Panc1 (cell line): ENCODE measurements at regions of chr10 and their contacts with region 1.

Region 1: GRCh38 chr10:11424456-11425297 is 186.8 kb downstream of the USP6NL start:
- DNase-seq: peak; percentile 25
- ATAC-seq: peak; percentile 89
- H3K4me3 ChIP-seq: no peak overlapping the region
- H3K27ac ChIP-seq: no peak overlapping the region
- H3K4me1 ChIP-seq: no peaks in the 10 kb centered on the region
- H3K27me3 ChIP-seq: no peaks in the 10 kb centered on the region
- CTCF ChIP-seq: peak; percentile 89

Region 2: DNA sequence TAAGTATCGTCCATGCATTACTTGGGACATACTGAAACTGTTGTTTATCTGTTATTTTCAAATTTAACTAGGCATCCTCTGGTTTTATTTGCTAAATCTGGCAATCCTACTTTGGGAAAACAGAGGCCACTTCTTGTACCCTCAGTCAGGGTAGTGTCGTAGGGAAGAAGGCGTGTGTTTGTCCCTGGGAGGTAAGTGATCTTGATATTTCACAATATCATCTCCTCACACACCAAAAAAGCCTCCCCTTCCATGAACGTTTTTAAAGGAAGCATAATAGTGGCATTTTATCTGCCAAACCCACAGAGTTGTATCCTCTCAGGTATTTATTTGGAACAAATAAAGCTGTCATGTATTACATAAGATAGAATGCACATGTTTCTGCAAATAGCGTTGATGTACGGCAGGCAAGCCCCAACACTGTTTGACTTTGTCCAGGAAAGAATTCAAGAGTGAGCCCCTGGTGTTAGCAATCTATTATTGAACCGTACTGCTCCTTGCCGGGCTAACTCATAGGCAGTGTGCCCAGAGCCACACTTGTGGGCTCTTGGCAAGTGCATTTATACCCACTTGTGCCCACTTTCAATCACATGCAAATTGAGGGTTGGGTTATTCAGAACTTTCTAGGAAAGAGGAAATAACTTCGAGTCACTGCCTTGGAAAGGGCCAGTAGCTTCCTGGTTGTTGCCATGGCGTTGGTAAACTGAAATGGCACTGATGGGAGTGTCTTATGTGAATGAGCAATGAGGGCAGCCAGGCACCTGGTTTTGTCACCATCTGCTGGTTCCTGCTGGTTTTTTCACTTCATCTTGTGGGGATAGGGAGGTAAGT is 79.2 kb before region 1 on chr10:
- CTCF ChIA-PET with region 1: no interaction called
- POLR2A ChIA-PET with region 1: interaction called, 15 read pairs
- in situ Hi-C with region 1: no loop called
- intact Hi-C with region 1: no loop called
- DNase-seq: no peak
- ATAC-seq: no peak
- H3K4me3 ChIP-seq: no peak overlapping the region
- H3K27ac ChIP-seq: no peak overlapping the region
- H3K4me1 ChIP-seq: no peaks in the 10 kb centered on the region
- H3K27me3 ChIP-seq: no peaks in the 10 kb centered on the region
- CTCF ChIP-seq: no peak